OCI-LY7 (cell line): ENCODE measurements at regions of chr6 and their contacts with region 1.

Region 1: GRCh38 chr6:61886608-61887259 is 399.3 kb downstream of the KHDRBS2 start:
- DNase-seq: peak; percentile 6
- H3K4me3 ChIP-seq: no peak overlapping the region
- H3K27ac ChIP-seq: no peak overlapping the region
- H3K4me1 ChIP-seq: no peaks in the 10 kb centered on the region
- CTCF ChIP-seq: peak; percentile 69

Region 2: DNA sequence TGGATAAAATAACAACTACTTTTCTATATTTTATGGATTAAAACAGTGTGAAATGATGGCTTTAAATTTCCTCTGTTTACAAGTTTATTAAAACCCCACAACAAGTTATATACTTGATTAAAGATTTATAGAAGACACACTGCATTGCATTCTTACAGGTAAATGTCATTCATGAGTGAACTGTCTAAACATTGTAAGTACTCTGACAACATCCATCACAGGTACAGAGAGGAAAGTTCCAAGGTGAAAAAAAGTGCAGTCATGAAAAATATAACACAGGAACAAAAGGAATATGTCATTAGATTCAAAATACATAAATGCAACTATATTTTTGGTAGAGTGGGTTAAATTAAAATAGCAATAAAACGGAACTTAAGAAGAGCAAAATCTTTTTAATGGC is 242.4 kb after region 1 on chr6:
- CTCF ChIA-PET with region 1: no interaction called
- POLR2A ChIA-PET with region 1: no interaction called
- intact Hi-C with region 1: no loop called
- DNase-seq: no peak
- H3K4me3 ChIP-seq: no peak overlapping the region
- H3K27ac ChIP-seq: no peak overlapping the region
- H3K4me1 ChIP-seq: no peaks in the 10 kb centered on the region
- CTCF ChIP-seq: no peak

Region 3: DNA sequence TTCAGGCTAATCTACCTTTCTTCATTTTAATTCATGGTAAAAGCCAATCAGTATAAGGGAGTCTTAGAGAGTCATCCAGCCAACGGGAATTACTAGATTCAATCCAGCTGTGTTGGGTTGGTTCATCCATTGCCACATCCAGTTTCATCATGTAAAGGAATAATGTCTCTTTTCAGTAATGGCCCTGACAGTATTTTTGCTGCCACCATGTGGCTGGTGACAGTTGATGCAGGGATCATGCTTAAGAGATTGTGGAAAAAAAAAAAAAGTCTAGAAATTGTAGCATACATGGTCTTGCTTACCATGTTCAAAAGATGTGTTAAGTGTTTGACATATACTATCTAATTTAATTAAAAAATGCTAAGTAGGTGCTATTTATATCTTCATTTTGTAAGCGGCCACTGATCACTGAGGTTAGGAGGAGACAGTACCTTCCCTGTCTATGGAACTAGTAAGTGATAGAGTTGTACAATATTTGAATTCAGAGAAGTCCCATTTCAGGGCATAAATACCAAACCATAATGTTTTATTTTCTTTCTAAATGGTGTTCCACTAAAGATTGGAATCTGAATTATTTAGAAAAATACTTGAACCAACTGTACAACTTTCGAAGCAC is 263.4 kb after region 1 on chr6:
- CTCF ChIA-PET with region 1: no interaction called
- POLR2A ChIA-PET with region 1: no interaction called
- intact Hi-C with region 1: loop called (anchors 10 kb)
- DNase-seq: peak; percentile 45
- H3K4me3 ChIP-seq: no peak overlapping the region
- H3K27ac ChIP-seq: no peak overlapping the region
- H3K4me1 ChIP-seq: no peaks in the 10 kb centered on the region
- CTCF ChIP-seq: peak; percentile 88

Region 4: DNA sequence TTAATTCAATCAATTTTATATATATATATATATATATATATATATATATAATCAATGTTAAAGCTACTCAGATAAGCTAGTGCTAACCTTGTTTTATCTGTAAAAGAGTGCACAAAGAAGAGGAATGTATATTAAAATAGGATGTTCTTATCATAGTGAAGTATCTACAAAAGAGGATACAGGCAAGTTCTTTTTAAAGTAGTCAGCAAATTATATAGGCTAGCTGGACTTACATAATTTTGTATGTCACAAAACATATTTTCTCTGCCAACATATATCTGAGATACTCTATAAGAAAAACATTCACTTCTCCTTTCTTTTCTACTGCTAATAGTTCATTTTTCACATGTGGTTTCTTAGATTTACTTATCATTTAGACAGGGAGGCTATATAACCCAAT is 359.4 kb after region 1 on chr6:
- CTCF ChIA-PET with region 1: no interaction called
- POLR2A ChIA-PET with region 1: no interaction called
- intact Hi-C with region 1: loop called (anchors 10 kb)
- DNase-seq: no peak
- H3K4me3 ChIP-seq: no peak overlapping the region
- H3K27ac ChIP-seq: no peak overlapping the region
- H3K4me1 ChIP-seq: no peaks in the 10 kb centered on the region
- CTCF ChIP-seq: no peak